Kidney (tissue), 22 donors: ENCODE measurements at regions of chr22 and their contacts with region 1.

Region 1: DNA sequence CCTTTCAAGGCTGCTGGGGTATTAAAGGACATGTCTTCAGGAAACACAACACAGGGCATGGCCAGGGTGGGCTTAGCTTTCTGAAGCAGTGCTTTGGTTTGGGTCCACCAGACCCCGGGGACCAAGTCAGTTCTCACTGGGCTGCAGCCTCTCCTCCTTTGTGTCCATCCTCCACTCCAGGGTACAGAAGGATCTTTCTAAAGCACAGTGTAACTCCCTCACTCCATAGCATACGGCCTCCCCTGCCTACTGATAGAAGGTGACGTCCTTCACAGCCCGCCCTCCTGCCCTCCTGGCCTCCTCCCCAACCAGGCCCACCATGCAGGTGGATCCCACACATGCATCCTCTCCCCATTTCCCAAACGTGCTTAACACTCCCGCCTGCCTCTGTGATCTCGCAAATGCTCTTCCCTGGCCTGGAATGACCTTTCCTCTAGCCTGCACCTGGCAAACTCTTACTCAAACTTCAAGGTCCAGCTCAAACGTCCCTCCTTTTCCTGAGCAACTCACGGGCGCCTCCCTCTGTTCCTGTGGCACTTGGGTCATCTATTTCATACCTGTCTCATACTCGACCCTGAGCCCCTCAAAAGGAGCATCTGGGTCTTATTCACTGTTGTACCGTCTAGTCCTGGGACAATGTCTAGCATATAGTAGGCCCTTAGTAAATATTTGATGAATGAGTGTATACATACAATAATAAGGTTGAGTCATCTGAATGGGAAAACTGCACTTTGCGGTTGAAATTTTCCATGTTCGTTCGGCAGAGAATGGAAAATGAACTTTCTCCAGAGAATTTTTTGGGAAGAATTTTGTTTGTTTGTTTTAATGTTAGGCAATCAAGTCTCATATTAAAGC is 187.7 kb downstream of the EFCAB6 start:
- DNase-seq: no peak
- H3K4me3 ChIP-seq: no peak overlapping the region
- H3K27ac ChIP-seq: no peak overlapping the region
- H3K4me1 ChIP-seq: no peaks in the 10 kb centered on the region
- H3K27me3 ChIP-seq: no peaks in the 10 kb centered on the region
- CTCF ChIP-seq: no peak

Region 2: DNA sequence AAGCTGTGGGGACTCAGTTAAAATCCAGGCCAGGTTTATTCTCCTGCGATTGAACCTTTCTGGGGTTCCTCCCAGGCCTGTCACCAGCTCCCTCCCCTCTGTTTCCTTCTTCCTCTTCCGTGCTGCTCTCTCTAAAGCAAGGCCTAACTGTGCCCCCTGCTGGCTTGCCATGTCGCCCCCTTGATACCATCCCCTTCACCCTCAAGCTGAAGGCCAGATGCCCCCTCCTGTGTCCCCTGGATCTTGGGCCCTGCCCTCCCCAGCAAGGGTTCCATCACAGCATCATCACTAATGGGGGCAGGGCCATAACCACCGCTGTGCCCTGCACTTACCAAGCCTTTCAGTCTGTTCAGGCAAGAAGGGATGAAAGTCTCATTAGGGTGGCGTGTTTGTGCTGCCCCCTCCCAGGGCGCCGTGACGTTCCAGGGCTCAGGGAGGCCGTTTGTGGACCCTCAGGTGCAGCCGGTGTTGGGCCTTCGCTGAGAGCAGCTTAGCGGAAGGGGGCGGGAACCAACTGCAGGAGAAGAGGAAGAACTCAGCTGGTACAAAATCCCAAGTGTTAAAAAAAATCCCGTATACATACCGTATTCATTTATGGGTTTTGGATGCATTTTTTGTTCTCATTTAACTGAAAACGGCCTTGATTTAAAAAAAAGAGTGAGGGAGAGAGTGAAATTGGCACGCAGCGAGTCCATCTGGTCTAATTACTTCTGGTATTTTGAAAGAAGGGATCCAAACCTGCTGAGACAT is 142.6 kb before region 1 on chr22:
- intact Hi-C with region 1: no loop called
- DNase-seq: peak in 1 of 5 donors; percentile 63
- H3K4me3 ChIP-seq: no peak overlapping the region
- H3K27ac ChIP-seq: no peak overlapping the region
- H3K4me1 ChIP-seq: no peaks in the 10 kb centered on the region
- H3K27me3 ChIP-seq: peaks cover 6% of the 10 kb centered on the region
- CTCF ChIP-seq: no peak

Region 3: DNA sequence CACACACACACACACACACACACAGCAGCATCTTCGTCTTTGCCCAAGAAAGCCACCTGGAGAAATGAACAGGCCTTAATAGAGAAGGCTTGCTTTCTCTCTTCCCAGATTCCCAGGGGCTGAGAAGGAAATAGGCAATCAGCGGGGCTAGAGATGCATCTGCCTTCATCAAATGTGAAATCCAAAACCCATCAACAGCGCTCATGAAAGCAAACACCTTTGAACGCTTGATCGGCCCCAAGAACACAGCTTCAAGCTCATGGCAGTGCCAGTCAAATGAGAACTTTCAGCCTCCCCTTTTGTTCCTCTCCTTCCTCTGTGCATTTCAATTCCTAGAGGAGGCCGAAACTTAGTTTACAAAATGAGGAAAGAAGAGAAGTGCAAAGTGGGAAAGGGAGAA is 65.0 kb after region 1 on chr22:
- intact Hi-C with region 1: loop called (anchors 10 kb)
- DNase-seq: peak in 3 of 5 donors; percentile 37 to 75 (median 69)
- H3K4me3 ChIP-seq: no peak overlapping the region
- H3K27ac ChIP-seq: no peak overlapping the region
- H3K4me1 ChIP-seq: no peaks in the 10 kb centered on the region
- H3K27me3 ChIP-seq: no peaks in the 10 kb centered on the region
- CTCF ChIP-seq: no peak